Aorta (tissue), 5 donors: ENCODE measurements at regions of chr7 and their contacts with region 1.

Region 1: DNA sequence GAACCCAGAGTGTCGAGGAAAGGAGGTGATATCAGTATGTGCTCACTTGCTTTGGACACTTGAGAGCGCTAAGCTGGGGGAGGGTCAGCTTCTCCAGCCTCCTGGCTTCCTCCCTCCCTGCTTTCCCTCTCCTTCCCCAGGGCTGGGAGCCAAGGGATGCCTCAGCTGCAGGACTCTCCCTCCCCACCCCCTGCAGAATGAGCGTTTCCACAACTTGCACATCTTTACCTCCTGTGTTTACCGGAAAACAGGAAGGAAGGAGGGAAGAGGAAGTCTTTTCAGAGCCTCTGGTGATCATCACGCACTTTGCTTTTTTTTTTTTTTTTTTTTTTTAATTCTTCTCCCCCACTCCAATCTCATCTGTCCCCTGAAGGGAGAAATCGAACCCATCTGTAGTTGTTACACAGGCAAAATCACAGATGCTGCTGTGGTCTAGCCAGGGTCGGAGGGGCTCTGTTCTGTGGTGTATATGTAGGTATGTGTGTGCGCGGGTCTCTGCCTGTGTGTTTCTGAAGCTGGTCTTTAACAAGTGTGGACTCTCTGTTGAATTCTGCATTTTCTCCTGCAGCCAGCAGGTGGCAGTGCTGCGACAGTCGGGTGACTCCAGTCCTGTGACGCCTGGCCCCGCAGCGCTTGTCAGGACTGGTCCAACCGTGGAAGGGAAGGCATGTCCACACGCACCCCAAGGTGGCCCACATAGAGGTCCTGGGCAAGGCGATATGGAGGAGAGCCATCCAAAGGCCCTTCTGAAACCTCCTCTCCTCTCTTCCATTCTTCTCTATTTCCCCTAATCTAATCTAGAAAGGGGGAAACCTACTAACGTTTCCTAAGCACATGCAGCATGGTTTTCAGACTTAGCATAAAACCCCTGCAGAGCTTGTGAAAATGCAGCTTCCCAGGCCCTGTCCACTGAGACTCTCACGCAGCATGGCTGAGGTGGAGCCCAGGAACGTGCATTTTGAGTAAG is 257.6 kb downstream of the PLXNA4 start:
- DNase-seq: peak; percentile 87 to 96
- ATAC-seq: peak; percentile 92
- H3K4me3 ChIP-seq: no peak overlapping the region
- H3K27ac ChIP-seq: no peak overlapping the region
- H3K4me1 ChIP-seq: no peaks in the 10 kb centered on the region
- H3K27me3 ChIP-seq: no peaks in the 10 kb centered on the region

Region 2: GRCh38 chr7:132351954-132352499 is 33.4 kb after region 1 on chr7:
- intact Hi-C with region 1: no loop called
- DNase-seq: peak; percentile 82 to 83
- ATAC-seq: peak; percentile 44
- H3K4me3 ChIP-seq: peak overlapping the region in 1 of 2 donors; percentile 8
- H3K27ac ChIP-seq: peak overlapping the region; percentile 50 to 84
- H3K4me1 ChIP-seq: no peaks in the 10 kb centered on the region
- H3K27me3 ChIP-seq: no peaks in the 10 kb centered on the region

Region 3: DNA sequence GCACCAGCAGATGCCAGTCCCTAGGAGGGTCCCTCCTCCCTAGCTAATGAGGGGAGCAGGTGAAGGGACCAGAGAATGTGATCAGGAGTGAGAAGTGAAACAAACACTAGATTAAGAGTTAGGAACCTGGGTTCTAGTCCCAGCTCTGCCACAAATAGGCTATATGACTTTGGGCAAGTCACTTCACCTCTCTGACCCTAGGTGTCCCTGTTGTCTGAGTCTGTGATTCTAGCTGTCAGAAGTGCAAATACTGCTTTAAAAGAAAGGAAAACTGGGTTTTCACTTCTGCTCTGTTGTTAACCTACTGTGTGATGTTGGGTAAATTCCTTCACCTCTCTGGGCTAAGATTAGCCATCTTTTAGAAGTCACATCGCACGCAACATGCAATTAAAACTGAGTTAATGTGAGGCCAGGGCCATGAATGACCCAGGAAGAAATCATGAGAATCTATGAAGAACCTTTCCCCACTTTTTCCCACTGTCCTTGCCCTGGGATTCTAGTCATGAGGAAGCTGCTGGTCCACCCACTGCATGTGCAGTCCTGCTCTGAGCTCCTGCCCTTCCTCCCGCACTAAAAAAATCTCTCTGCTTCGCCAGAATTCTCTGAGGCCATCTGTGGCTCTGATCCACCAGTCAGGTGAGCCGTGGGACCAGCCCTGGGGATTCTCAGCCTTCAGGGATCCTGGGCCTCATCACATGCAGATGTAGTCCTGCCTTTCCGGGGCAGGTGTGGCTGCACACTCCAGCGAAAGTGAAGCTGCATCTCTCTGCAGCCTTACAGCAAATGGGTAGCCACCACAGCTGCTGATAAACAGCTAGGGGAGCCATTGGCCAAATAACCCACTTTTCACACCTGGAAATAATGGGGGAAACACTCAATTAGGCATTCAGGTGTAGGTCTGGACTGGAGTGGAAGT is 75.9 kb after region 1 on chr7:
- intact Hi-C with region 1: loop called in 1 of 2 experiments (anchors 5 kb)
- DNase-seq: no peak
- ATAC-seq: peak; percentile 17
- H3K4me3 ChIP-seq: no peak overlapping the region
- H3K27ac ChIP-seq: no peak overlapping the region
- H3K4me1 ChIP-seq: peaks cover 0 to 5% of the 10 kb centered on the region in 2 donors
- H3K27me3 ChIP-seq: no peaks in the 10 kb centered on the region

Region 4: GRCh38 chr7:132500727-132501440 is 182.2 kb after region 1 on chr7:
- intact Hi-C with region 1: loop called (anchors 2 kb)
- DNase-seq: peak; percentile 86
- ATAC-seq: peak; percentile 81
- H3K4me3 ChIP-seq: no peak overlapping the region
- H3K27ac ChIP-seq: no peak overlapping the region
- H3K4me1 ChIP-seq: no peaks in the 10 kb centered on the region
- H3K27me3 ChIP-seq: no peaks in the 10 kb centered on the region